Gastrocnemius medialis (tissue), 4 donors: ENCODE measurements at regions of chr2 and their contacts with region 1.

Region 1: DNA sequence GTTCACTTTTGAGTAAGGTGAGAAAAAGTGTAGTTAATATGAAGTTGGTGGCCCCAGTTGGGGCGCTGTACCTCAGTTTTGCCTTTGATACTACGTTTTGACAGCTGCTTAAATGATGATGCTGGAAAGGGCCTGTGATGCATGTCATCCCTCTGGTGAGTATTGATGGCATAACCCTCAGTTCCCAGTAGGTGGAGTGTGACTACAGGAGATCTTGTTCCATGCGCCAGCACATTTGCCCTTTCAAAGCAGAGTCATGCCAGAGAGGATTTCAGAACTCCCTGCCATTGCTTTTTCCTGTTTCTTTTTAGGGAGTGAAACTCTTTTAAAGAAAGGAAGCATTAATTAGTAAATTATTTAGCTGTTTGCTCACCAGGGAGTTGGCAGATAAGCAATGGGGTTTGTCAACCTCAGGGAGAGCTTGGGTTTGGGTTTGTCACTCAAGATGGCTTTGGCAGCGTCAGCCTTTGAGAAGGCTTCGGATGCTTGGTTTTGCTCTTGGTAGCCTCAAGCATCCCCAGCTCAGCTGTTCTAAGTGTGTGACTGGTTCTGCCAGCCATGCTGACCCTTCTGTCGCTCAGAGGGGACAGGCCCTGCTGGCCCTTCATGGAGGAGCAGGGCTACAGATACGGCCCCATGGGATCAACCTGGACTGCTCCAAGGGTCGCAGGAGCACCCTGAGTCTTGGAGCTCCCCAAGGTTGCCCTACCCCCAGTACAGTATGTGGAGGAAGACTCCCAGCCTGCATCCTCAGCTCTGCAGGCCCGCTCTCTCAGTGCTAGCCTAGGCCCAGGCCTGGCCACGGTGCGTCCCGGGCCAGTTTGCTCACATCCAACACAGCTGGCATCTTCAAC is 29.1 kb downstream of the ARMC9 start:
- DNase-seq: peak; percentile 41 to 54
- ATAC-seq: peak; percentile 97 to 99
- H3K4me3 ChIP-seq: no peak overlapping the region
- H3K27ac ChIP-seq: peak overlapping the region; percentile 33 to 71 (median 54)
- H3K4me1 ChIP-seq: peaks cover 3 to 11% of the 10 kb centered on the region in 2 donors
- H3K27me3 ChIP-seq: no peaks in the 10 kb centered on the region
- CTCF ChIP-seq: peak; percentile 55 to 77 (median 75)
- POLR2A ChIP-seq: no peak

Region 2: DNA sequence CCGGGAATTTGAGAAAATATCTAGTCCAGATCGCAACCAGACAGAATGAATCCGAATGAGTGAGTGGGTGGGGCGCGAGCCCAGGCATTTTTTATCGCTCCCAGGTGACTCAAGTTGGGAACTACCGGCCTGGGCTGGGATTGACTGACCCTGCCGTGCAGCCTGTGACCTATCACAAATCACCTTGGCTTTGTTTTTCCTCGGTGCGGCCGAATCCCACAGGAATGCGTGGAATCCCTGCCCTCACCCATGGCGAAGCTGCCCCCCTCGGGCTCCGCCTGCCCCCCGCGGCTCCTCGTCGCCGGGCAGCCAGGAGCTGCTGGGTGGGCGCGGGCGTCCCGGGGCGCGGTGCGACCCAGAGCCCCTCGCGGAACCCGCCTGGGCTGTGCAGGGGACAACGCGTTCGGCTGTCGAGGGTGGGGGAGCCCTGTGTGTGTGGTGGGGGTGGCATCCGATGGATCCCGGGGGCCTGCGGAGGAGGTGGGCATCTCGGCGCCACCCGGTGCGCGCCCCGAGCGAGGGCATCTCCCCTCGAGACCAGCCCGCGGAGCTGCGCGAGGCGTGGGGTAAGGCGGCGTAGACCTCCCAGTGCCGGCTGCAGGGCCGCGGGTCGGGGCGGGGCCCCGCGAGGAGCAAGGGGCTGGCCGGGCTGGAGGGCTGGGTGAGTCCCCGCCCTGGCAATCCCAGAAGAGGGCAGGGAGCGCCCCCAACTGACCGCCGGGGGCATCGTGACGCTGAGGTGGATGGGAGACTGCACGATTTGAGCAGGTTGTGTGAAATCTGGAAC is 184.5 kb after region 1 on chr2:
- in situ Hi-C with region 1: loop called in 2 of 4 experiments (anchors 5 to 25 kb)
- intact Hi-C with region 1: loop called (anchors 2 kb)
- DNase-seq: peak; percentile 45 to 53
- ATAC-seq: peak; percentile 61 to 76
- H3K4me3 ChIP-seq: peak overlapping the region; percentile 47 to 58 (median 50)
- H3K27ac ChIP-seq: no peak overlapping the region
- H3K4me1 ChIP-seq: peaks cover 0 to 5% of the 10 kb centered on the region in 2 donors
- H3K27me3 ChIP-seq: peaks cover 0 to 7% (median 0%) of the 10 kb centered on the region in 3 donors
- CTCF ChIP-seq: peak in 4 of 5 experiments; percentile 40 to 66 (median 64)
- POLR2A ChIP-seq: no peak

Region 3: DNA sequence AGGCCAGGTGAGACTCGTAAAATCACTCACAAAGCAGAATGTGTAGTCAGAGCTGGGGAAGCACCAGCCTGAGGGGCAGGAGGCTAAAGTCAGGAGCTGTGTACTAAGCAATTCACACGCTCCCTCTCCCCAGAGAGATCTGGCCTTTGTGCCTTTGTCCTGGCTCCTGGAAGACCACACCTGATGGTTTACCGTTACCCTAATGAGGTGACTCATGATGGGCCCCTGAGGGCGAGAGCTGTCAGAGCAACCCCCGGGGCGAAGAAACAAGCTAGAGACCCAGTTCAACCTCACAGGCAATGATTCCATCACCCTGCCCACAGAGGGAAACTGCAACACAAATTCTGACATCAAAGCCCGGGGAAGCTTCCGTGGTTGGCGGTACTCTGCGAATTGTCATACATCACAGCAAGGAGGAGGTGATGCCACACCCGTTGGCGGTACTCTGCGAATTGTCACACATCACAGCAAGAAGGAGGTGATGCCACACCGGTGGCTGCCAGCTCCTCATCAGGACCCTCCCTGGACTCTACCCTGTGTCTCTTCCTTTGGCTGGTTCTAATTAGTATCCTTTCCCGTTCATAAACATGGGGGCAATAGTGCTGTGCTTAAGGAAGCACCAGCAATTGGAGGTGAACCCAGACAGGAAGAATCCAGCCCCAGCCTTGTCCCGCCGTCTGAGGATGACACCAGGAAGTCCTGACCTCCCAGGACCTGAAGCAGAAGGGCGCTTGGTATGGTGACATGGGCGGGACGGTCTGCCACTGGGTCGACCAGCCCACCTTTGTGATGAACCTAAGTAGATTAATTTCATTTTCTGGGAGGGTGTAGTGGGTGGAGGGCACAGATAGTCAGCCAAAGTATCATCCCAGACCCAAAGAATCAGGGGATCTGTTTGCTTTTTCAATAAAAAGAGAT is 198.5 kb after region 1 on chr2:
- in situ Hi-C with region 1: loop called in 2 of 4 experiments (anchors 25 kb)
- intact Hi-C with region 1: no loop called
- DNase-seq: no peak
- ATAC-seq: no peak
- H3K4me3 ChIP-seq: no peak overlapping the region
- H3K27ac ChIP-seq: no peak overlapping the region
- H3K4me1 ChIP-seq: no peaks in the 10 kb centered on the region
- H3K27me3 ChIP-seq: no peaks in the 10 kb centered on the region
- CTCF ChIP-seq: no peak
- POLR2A ChIP-seq: no peak

Region 4: GRCh38 chr2:231452799-231453508 is 225.4 kb after region 1 on chr2:
- in situ Hi-C with region 1: loop called in 1 of 4 experiments (anchors 25 kb)
- intact Hi-C with region 1: loop called (anchors 1 kb)
- DNase-seq: no peak
- ATAC-seq: no peak
- H3K4me3 ChIP-seq: no peak overlapping the region
- H3K27ac ChIP-seq: no peak overlapping the region
- H3K4me1 ChIP-seq: no peaks in the 10 kb centered on the region
- H3K27me3 ChIP-seq: no peaks in the 10 kb centered on the region
- CTCF ChIP-seq: no peak
- POLR2A ChIP-seq: no peak